ENCODE measurements at regions of chr5 and their contacts with region 1.

Region 1: GRCh38 chr5:107224272-107224671 is 446.5 kb downstream of the EFNA5 start:
- DNase-seq: no peak

Region 2: DNA sequence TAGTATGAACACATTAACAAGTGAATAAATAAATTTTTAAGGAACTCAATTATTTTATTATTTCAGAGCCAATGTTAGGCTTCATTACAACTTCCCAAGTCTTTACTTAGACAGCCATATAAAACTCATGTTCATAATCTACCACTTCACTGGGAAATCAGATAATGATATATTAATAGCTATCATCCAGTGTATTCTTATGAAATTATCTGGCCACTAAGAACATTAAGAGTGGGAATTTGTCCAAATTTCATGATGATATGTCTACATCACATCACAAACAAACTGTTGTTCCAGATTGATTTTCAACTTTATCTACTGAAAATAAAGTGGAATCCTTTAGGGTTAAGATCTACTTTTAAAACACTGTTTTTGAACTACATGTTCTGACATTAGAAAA is 222.2 kb before region 1 on chr5:
- intact Hi-C with region 1: no loop called
- DNase-seq: no peak

Region 3: GRCh38 chr5:107149243-107150005 is 74.8 kb before region 1 on chr5:
- intact Hi-C with region 1: no loop called
- DNase-seq: no peak

Region 4: DNA sequence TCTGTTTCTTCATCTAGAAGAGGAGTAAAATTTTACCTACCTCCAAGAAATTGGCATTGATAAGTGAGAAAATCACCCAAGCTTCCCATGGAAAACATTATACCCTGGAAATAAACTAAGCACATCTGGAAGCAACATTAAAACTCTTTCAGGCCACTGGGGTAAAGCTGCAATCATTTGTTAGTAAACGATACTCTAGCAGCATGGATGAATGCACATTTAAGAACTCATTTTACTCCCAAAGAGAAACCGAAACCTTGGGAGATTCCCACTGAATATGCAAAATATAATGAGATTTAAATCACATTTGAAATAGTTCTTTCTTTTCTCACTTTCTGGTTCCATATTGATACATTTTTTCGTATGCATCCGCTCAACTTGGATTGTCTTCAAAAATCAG is 21.0 kb before region 1 on chr5:
- intact Hi-C with region 1: no loop called
- DNase-seq: no peak

Region 5: GRCh38 chr5:107373549-107374263 is 149.4 kb after region 1 on chr5:
- intact Hi-C with region 1: loop called (anchors 5 kb)
- DNase-seq: no peak